ENCODE measurements at regions of chr11 and their contacts with region 1.

Region 1: DNA sequence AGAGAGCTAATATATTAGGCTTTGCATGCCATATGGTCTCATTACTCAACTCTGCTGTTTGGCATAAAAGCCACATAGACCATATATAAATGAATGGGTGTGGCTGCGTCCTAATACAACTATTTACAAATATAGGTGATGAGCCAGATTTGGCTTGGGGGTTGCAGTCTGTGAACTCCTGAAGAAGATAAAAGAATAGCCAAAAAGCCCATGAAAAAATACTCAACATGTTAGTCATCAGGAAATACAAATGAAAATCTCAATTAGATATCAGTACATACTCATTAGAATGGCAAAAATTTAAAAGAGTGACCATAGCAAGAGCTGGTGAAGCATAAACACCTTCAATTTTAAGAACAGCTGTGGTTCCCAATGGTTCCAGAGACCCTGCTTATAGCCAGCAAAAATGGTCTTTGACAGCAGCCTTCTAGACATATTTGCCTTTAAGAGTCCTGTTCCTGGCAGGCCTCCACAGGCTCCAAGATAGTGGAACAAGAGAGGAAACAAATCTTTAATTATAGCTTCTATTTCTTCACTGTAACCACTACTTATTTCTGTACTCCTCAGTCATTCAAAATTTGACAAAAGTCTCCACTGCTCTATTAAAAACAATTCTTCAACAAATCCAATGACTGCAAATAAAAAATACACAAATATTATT is 16.1 kb downstream of the C2CD3 start:
- DNase-seq: no peak
- ATAC-seq: no peak
- H3K4me3 ChIP-seq: no peak overlapping the region
- H3K27ac ChIP-seq: peak overlapping the region in 1 of 10 donors; percentile 15
- H3K4me1 ChIP-seq: peaks cover 0 to 11% (median 9%) of the 10 kb centered on the region in 9 donors
- H3K27me3 ChIP-seq: no peaks in the 10 kb centered on the region
- CTCF ChIP-seq: no peak

Region 2: DNA sequence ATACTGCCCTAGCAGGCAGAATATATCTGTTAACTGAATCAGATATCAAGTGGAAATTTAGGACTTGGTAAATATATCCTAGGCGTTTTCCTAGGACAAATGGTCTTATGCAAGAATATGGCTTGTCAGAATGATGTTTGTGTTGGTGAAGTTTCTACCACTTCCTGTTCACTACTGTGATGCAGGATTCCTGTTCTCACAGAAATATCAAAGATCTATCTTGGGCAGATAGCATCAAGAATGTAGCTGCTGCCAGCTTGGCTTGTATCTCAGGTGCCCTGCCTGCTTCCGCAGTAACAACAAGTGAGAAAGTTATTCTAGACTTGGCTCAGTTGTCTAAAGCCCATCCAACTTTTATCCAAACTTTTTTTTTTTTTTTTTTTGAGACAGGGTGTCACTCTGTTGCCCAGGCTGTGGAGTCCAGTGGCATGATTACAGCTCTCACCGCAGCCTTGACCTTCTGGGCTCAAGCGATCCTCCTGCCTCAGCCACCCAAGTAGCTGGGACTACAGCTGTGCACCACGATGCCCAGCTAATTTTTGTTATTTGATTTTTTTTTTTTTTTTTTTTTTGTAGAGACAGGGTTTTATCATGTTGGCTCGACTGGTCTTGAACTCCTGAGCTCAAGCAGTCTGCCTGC is 77.7 kb after region 1 on chr11:
- intact Hi-C with region 1: loop called in 1 of 10 experiments (anchors 10 kb)
- DNase-seq: no peak
- ATAC-seq: peak in 3 of 8 donors; percentile 45 to 66 (median 53)
- H3K4me3 ChIP-seq: no peak overlapping the region
- H3K27ac ChIP-seq: no peak overlapping the region
- H3K4me1 ChIP-seq: peaks cover 0 to 15% (median 9%) of the 10 kb centered on the region in 9 donors
- H3K27me3 ChIP-seq: no peaks in the 10 kb centered on the region
- CTCF ChIP-seq: no peak

Region 3: GRCh38 chr11:74493791-74494630 is 339.3 kb after region 1 on chr11:
- intact Hi-C with region 1: no loop called
- DNase-seq: no peak
- ATAC-seq: no peak
- H3K4me3 ChIP-seq: peak overlapping the region; percentile 45 to 96 (median 84)
- H3K27ac ChIP-seq: peak overlapping the region; percentile 93 to 99 (median 98)
- H3K4me1 ChIP-seq: peaks cover 0 to 20% (median 10%) of the 10 kb centered on the region in 9 donors
- H3K27me3 ChIP-seq: no peaks in the 10 kb centered on the region
- CTCF ChIP-seq: no peak

Measured in heart right ventricle (tissue), 16 donors.